CD14-positive monocyte (primary cell): ENCODE measurements at regions of chr13 and their contacts with region 1.

Region 1: GRCh38 chr13:113296842-113297369 is at the start of gene LAMP1:
- DNase-seq: peak; percentile 92 to 98 (median 98)
- H3K4me3 ChIP-seq: peak within 1 kb of the TSS; percentile 45 to 76 (median 65)
- H3K4me3 Mint-ChIP-seq: peak within 1 kb of the TSS; percentile 91 to 96
- H3K27ac ChIP-seq: peak within 1 kb of the TSS; percentile 70 to 87
- H3K27ac Mint-ChIP-seq: peak within 1 kb of the TSS; percentile 86 to 96 (median 94)
- H3K4me1 ChIP-seq: peaks cover 40 to 58% of the 10 kb centered on the region in 2 donors
- H3K4me1 Mint-ChIP-seq: peaks cover 40% of the 10 kb centered on the region
- H3K27me3 ChIP-seq: peaks cover 0 to 6% of the 10 kb centered on the region in 2 donors
- H3K27me3 Mint-ChIP-seq: peaks cover 6 to 20% (median 16%) of the 10 kb centered on the region in 3 donors
- CTCF ChIP-seq: no peak
- polyA plus RNA-seq, gene LAMP1: 22.0 to 122 (median 24.5) TPM

Region 2: GRCh38 chr13:112587212-112587763 is 709.6 kb before region 1 on chr13:
- intact Hi-C with region 1: loop called in 1 of 2 experiments (anchors 10 kb)
- DNase-seq: peak; percentile 78 to 82 (median 81)
- H3K4me3 ChIP-seq: peak overlapping the region; percentile 83 to 96 (median 88)
- H3K4me3 Mint-ChIP-seq: peak overlapping the region; percentile 95 to 99
- H3K27ac ChIP-seq: peak overlapping the region; percentile 87 to 91
- H3K27ac Mint-ChIP-seq: peak overlapping the region; percentile 91 to 99 (median 97)
- H3K4me1 ChIP-seq: peaks cover 48 to 60% of the 10 kb centered on the region in 2 donors
- H3K4me1 Mint-ChIP-seq: peaks cover 58% of the 10 kb centered on the region
- H3K27me3 ChIP-seq: no peaks in the 10 kb centered on the region
- H3K27me3 Mint-ChIP-seq: peaks cover 0 to 2% (median 0%) of the 10 kb centered on the region in 3 donors
- CTCF ChIP-seq: no peak

Region 3: DNA sequence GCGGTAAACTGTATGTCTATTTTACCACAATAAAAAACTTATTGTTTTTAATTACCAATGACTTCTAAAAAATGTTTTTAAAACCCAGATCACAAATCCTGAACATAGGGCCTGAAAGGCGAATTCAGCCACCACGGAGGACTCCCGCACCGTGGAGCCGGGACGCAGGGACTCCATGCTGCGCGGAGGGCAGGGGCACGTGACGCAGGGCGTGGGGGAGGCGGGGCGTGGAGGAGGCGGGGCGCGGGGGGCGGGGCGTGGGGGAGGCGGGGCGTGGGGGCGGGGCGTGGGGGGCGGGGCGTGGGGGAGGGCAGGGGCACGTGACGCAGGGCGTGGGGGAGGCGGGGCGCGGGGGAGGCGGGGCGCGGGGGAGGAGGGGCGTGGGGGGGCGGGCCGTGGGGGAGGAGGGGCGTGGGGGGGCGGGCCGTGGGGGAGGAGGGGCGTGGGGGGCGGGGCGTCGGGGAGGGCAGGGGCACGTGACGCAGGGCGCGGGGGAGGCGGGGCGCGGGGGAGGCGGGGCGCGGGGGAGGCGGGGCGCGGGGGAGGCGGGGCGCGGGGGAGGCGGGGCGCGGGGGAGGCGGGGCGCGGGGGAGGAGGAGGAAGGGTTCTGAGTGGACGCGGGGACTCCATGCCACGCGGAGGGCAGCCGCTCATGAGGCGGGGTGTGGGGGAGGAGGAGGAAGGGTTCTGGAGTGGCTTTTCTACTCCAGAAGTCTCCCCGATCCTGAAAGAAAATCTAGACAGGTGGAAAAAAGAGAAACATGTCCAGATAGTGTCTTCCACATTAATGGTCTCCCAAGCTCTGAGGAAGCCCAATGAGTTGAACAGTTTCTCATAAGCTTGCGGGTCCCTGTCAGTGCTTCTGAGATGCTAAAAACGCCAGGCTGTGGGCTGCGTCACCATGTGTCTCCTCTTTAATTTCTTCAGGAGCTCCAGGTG is 142.8 kb before region 1 on chr13:
- intact Hi-C with region 1: loop called in 1 of 2 experiments (anchors 5 kb)
- DNase-seq: peak; percentile 61 to 81 (median 64)
- H3K4me3 ChIP-seq: peak overlapping the region; percentile 31 to 77 (median 46)
- H3K4me3 Mint-ChIP-seq: peak overlapping the region; percentile 83 to 91
- H3K27ac ChIP-seq: peak overlapping the region in 1 of 2 donors; percentile 45
- H3K27ac Mint-ChIP-seq: peak overlapping the region; percentile 45 to 91 (median 75)
- H3K4me1 ChIP-seq: peaks cover 24 to 28% of the 10 kb centered on the region in 2 donors
- H3K4me1 Mint-ChIP-seq: peaks cover 27% of the 10 kb centered on the region
- H3K27me3 ChIP-seq: peaks cover 13 to 27% of the 10 kb centered on the region in 2 donors
- H3K27me3 Mint-ChIP-seq: peaks cover 27 to 38% (median 32%) of the 10 kb centered on the region in 3 donors
- CTCF ChIP-seq: no peak